Activated T-helper 1 cell treated with anti-CD3 and anti-CD28 coated beads, Interleukin-12 subunit alpha, Interleukin-12 subunit beta, Interleukin-2, Interleukin-4 antibody, amounts not matched to agents 30 ng/mL and 10 ng/mL and 1 ng/mL, durations not matched to agents 14 hours and 24 hours and 36 hours (primary cell): ENCODE measurements at regions of chr16 and their contacts with region 1.

Region 1: DNA sequence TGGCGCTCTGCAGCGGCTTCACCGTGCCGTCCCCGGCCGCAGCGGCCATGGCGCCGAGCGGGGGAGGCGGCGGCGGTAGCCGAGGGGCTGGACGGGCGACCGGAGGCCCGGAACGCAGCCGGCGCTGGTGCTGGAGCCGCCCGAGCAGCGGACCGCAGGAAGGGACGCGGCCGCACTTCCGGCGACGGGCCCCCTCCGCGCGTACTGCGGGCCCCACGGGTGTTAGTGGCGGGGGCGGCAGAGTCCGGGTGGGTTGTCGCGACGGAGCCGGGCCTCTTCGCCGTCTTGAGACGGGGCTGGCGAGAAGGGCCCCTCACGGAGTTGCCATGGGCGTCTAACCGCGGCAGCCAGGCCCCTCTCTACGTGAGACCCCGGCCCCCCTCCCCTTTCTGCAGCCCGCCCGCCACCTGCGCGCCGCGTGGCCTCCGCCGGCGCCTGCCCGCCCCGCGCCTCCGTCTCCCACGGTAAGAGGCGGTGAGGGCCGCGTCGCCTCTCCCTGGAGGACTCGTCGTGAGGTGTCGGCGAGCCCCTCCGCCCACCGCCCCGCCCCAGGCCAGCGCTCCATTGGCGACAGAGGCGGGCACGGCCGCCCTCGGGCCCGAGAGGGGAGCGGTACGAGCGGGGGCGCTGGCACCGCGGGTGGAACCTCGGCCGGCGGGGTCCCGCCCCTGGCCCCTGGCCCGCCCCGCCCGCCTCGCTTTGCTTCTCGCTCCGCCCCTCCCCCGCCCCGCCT is at the starts of genes VPS9D1 and ZNF276:
- DNase-seq: peak; percentile 73
- H3K4me3 Mint-ChIP-seq: peak within 1 kb of the TSS; percentile 95
- H3K27ac Mint-ChIP-seq: peak within 1 kb of the TSS; percentile 95
- H3K4me1 Mint-ChIP-seq: peaks cover 32% of the 10 kb centered on the region
- H3K27me3 Mint-ChIP-seq: no peaks in the 10 kb centered on the region
- total RNA-seq, gene VPS9D1: 4.9 and 5.9 TPM in 2 replicates
- total RNA-seq, gene ZNF276: 34.2 and 36.4 TPM in 2 replicates

Region 2: GRCh38 chr16:89657442-89658220 is 63.3 kb before region 1 on chr16 and contains the starts of genes CHMP1A and SPATA33:
- intact Hi-C with region 1: loop called (anchors 2 kb)
- DNase-seq: peak; percentile 91
- H3K4me3 Mint-ChIP-seq: peak within 1 kb of the TSS; percentile 93
- H3K27ac Mint-ChIP-seq: peak within 1 kb of the TSS; percentile 84
- H3K4me1 Mint-ChIP-seq: peaks cover 56% of the 10 kb centered on the region
- H3K27me3 Mint-ChIP-seq: no peaks in the 10 kb centered on the region
- total RNA-seq, gene CHMP1A: 85.7 and 87.7 TPM in 2 replicates
- total RNA-seq, gene SPATA33: 15.1 and 16.1 TPM in 2 replicates

Region 3: GRCh38 chr16:89737341-89738071 is 16.5 kb after region 1 on chr16:
- intact Hi-C with region 1: loop called (anchors 1 kb)
- DNase-seq: peak; percentile 26
- H3K4me3 Mint-ChIP-seq: no peak overlapping the region
- H3K27ac Mint-ChIP-seq: peak overlapping the region; percentile 70
- H3K4me1 Mint-ChIP-seq: peaks cover 15% of the 10 kb centered on the region
- H3K27me3 Mint-ChIP-seq: no peaks in the 10 kb centered on the region

Region 4: GRCh38 chr16:89828199-89828778 is 107.3 kb after region 1 on chr16 and contains the start of gene SPIRE2:
- intact Hi-C with region 1: loop called (anchors 1 kb)
- DNase-seq: peak; percentile 76
- H3K4me3 Mint-ChIP-seq: peak within 1 kb of the TSS; percentile 75
- H3K27ac Mint-ChIP-seq: no peak within 1 kb of the TSS
- H3K4me1 Mint-ChIP-seq: no peaks in the 10 kb centered on the region
- H3K27me3 Mint-ChIP-seq: peaks cover 40% of the 10 kb centered on the region
- total RNA-seq, gene SPIRE2: 1.5 and 2.7 TPM in 2 replicates

Region 5: DNA sequence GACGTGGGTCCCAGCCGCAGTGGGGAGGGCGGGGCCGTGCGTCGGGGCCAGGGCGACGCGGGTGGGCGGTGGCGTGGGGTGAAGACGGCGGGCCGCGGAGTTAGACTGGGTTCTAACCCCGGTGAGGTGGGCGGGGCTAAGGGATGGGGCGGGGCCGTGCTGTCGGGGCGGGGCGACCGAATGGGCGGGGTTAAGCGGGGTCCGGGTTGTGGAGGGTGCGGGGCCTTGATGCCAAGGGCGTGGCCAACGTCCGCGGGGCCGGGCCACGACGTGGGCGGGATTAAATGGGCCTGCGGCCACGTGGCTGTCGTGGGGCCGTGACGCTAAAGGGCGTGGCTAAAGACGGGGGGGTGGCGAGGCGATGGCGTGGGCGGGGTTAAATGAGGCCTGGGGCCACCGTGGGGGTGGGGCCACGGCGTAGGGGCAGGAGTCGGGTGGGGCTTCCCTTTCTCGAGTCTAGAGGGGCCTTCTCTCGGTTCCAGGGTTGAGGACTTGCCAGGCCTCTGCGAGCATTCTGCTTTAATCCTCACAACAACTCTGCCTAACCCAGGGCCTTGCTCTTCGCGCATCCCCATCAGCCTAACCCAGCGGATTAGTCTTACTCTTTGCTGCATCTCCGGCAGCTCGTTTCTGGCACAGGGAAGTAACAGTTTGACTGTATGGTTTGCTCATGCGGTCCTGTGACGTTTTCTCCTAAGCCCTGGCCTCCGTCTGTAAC is 153.2 kb after region 1 on chr16:
- intact Hi-C with region 1: loop called (anchors 1 kb)
- DNase-seq: peak; percentile 88
- H3K4me3 Mint-ChIP-seq: peak overlapping the region; percentile 90
- H3K27ac Mint-ChIP-seq: peak overlapping the region; percentile 99
- H3K4me1 Mint-ChIP-seq: peaks cover 11% of the 10 kb centered on the region
- H3K27me3 Mint-ChIP-seq: peaks cover 2% of the 10 kb centered on the region

Region 6: DNA sequence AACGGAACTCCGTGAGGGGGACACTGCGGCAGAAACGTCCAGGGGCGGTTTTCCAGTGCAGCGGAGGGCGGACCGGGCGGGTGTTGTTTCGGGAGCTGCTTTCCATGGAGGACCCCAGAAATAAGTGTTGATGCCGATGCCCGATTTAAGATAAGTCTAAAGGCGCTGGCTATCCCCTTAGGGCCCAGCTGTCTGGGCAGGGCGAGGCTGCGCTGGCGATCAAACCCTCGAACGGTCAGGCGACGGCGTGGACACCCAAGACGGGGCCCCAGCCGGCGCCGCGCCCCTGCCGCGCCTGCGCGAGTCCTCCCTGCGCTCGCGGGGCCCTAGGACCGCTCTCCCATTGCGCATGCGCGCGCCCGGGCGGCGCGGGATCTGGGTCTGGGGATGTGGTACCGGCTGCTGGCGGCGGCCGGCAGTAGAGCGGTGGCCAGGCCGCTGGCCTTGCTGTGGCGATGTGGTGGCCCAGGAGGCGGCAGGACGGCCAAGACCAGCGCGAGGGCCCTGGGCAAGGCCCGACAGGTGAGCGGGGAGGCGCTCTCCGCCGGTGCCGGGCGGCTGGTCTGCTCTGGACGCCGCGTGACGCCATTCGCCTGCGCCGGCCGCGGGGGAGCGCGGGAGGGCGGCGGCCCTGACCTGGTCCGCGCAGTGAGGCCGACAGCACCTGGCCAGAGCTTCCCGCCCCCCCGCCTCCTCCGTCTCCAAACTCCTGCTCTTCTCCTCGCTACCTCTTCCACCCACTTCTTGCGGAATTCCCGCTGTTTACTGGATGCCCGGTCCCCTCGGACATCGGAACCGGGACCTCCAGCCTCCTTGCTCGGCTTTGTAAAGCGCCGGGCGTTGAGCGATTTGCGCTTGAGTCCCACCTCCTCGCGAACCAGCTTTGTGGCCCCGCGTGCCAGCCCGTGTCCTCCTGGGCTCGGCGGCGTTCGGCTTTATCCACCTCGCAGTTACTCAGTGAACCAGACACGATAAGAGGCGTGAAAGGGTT is 251.6 kb after region 1 on chr16:
- intact Hi-C with region 1: loop called (anchors 2 kb)
- DNase-seq: peak; percentile 92
- H3K4me3 Mint-ChIP-seq: peak overlapping the region; percentile 99
- H3K27ac Mint-ChIP-seq: peak overlapping the region; percentile 94
- H3K4me1 Mint-ChIP-seq: peaks cover 29% of the 10 kb centered on the region
- H3K27me3 Mint-ChIP-seq: peaks cover 2% of the 10 kb centered on the region